Calu3 (cell line): ENCODE measurements at regions of chr17 and their contacts with region 1.

Region 1: GRCh38 chr17:38752119-38752929 is at the start of gene PSMB3:
- DNase-seq: peak; percentile 100
- H3K4me3 Mint-ChIP-seq: peak within 1 kb of the TSS; percentile 78
- H3K27ac Mint-ChIP-seq: peak within 1 kb of the TSS; percentile 85
- H3K4me1 Mint-ChIP-seq: peaks cover 28% of the 10 kb centered on the region
- H3K27me3 Mint-ChIP-seq: no peaks in the 10 kb centered on the region
- CTCF ChIP-seq: no peak
- total RNA-seq, gene PSMB3: 893 and 935 TPM in 2 replicates

Region 2: GRCh38 chr17:38729886-38730525 is 22.3 kb before region 1 on chr17 and contains the start of gene CISD3:
- CTCF ChIA-PET with region 1: interaction called, 14 read pairs
- intact Hi-C with region 1: no loop called
- DNase-seq: peak; percentile 100
- H3K4me3 Mint-ChIP-seq: peak within 1 kb of the TSS; percentile 90
- H3K27ac Mint-ChIP-seq: peak within 1 kb of the TSS; percentile 85
- H3K4me1 Mint-ChIP-seq: peaks cover 48% of the 10 kb centered on the region
- H3K27me3 Mint-ChIP-seq: no peaks in the 10 kb centered on the region
- CTCF ChIP-seq: peak; percentile 100
- total RNA-seq, gene CISD3: 101 and 109 TPM in 2 replicates